ENCODE measurements at regions of chr1 and their contacts with region 1.

Region 1: GRCh38 chr1:31182352-31182751 is 57.3 kb downstream of the NKAIN1 start:
- DNase-seq: peak; percentile 67 to 79 (median 75)
- ATAC-seq: peak; percentile 83
- H3K4me3 ChIP-seq: no peak overlapping the region
- H3K4me1 ChIP-seq: peaks cover 9% of the 10 kb centered on the region
- CTCF ChIP-seq: no peak

Region 2: GRCh38 chr1:30779294-30780071 is 402.9 kb before region 1 on chr1:
- intact Hi-C with region 1: no loop called
- DNase-seq: peak; percentile 87 to 94 (median 92)
- ATAC-seq: peak; percentile 84
- H3K4me3 ChIP-seq: no peak overlapping the region
- H3K4me1 ChIP-seq: peaks cover 8% of the 10 kb centered on the region
- CTCF ChIP-seq: peak; percentile 90

Region 3: GRCh38 chr1:31306278-31306677 is 123.9 kb after region 1 on chr1:
- intact Hi-C with region 1: no loop called
- DNase-seq: no peak
- ATAC-seq: peak; percentile 41
- H3K4me3 ChIP-seq: no peak overlapping the region
- H3K4me1 ChIP-seq: no peaks in the 10 kb centered on the region
- CTCF ChIP-seq: no peak

Region 4: GRCh38 chr1:31335007-31335406 is 152.7 kb after region 1 on chr1:
- intact Hi-C with region 1: loop called in 1 of 2 experiments (anchors 10 kb)
- DNase-seq: peak in 1 of 3 donors; percentile 35
- ATAC-seq: peak; percentile 34
- H3K4me3 ChIP-seq: no peak overlapping the region
- H3K4me1 ChIP-seq: no peaks in the 10 kb centered on the region
- CTCF ChIP-seq: no peak